ENCODE measurements at regions of chr18 and their contacts with region 1.

Region 1: GRCh38 chr18:42114310-42114943 is 159.4 kb downstream of the PIK3C3 start:
- DNase-seq: peak; percentile 6 to 51
- ATAC-seq: peak; percentile 64 to 89; a peak in 4 of 6 replicates
- H3K4me3 ChIP-seq: no peak overlapping the region
- H3K27ac ChIP-seq: no peak overlapping the region
- H3K4me1 ChIP-seq: peaks cover 3% of the 10 kb centered on the region; the same call in 1 of the 3 replicates
- CTCF ChIP-seq: peak; percentile 77
- EP300 ChIP-seq: no peak
- POLR2A ChIP-seq: no peak
- RAD21 ChIP-seq: peak; percentile 88 to 90

Region 2: DNA sequence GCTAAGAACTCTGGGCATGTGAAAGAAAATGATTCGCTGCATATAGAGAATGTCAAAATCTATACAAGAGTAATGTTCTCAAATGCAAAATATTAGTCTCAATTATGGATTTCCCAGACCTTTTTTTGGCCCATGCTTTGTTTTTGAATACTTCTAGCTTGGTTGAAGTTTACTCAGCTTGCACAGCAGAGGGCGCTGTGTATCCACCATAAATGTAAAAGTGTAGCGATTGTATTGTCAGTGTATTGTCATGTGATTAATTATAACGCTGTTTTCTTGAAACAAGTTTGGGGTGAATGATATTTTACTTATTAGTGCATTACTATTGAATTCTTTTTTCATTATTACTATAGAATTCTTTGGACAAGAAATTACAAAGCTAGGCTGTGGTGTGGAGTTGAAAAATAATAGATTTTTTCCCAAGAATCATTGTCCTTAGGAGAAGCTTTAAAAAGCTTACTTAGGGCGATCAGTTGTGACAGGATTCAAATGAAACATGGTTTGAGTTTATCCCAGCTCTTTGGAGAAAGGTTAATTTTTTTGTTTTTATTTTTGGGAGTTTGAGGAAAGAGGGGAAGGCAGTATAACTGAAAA is 61.1 kb before region 1 on chr18:
- CTCF ChIA-PET with region 1: interaction called, 11 read pairs
- POLR2A ChIA-PET with region 1: no interaction called
- DNase-seq: peak in 1 of 2 experiments; percentile 33
- ATAC-seq: peak; percentile 73 to 75; a peak in 5 of 6 replicates
- H3K4me3 ChIP-seq: no peak overlapping the region
- H3K27ac ChIP-seq: no peak overlapping the region
- H3K4me1 ChIP-seq: peaks cover 8% of the 10 kb centered on the region; the same call in 2 of the 3 replicates
- CTCF ChIP-seq: peak; percentile 77
- EP300 ChIP-seq: no peak
- POLR2A ChIP-seq: no peak
- RAD21 ChIP-seq: peak; percentile 52 to 56

Region 3: GRCh38 chr18:42126586-42126985 is 12.2 kb after region 1 on chr18:
- CTCF ChIA-PET with region 1: interaction called, 18 read pairs
- POLR2A ChIA-PET with region 1: no interaction called
- DNase-seq: no peak
- ATAC-seq: no peak
- H3K4me3 ChIP-seq: no peak overlapping the region
- H3K27ac ChIP-seq: no peak overlapping the region
- H3K4me1 ChIP-seq: no peaks in the 10 kb centered on the region
- CTCF ChIP-seq: no peak
- EP300 ChIP-seq: no peak
- POLR2A ChIP-seq: no peak
- RAD21 ChIP-seq: no peak

Region 4: GRCh38 chr18:42229211-42230210 is 115.1 kb after region 1 on chr18:
- CTCF ChIA-PET with region 1: no interaction called
- POLR2A ChIA-PET with region 1: no interaction called
- DNase-seq: no peak
- ATAC-seq: no peak
- H3K4me3 ChIP-seq: no peak overlapping the region
- H3K27ac ChIP-seq: no peak overlapping the region
- H3K4me1 ChIP-seq: no peaks in the 10 kb centered on the region
- CTCF ChIP-seq: no peak
- EP300 ChIP-seq: no peak
- POLR2A ChIP-seq: no peak
- RAD21 ChIP-seq: no peak

Region 5: DNA sequence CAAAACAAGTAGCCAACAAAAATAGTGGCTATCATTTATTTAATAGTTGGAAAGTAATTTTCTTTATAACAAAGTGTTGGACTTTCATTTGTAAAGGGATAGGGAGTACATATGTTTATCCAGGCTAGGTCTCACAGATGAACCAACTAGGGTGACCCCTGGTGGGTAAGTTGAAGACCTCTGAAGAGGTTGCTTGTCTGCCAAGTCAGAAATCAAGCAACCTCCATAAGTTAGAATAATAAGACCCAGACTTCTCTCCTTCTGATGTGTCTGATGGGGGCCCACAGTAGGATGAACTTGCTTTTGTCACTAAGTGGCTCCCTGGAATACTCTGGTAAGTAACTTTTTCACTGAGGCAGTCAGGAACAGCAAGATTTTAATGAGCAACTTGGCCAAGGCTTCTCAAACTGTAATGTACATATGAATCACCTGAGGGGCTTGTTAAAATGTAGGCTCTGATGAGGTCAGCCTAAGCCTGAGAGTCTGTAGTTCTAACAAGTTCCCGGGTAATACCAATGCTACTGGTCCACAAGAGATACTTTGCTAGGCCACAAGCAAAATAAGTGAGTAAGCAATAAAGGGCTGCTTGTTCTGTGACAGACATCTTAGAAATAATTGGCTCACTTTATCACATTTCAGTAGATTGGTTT is 160.2 kb after region 1 on chr18:
- CTCF ChIA-PET with region 1: interaction called, 28 read pairs
- POLR2A ChIA-PET with region 1: no interaction called
- DNase-seq: peak in 1 of 2 experiments; percentile 34
- ATAC-seq: peak in 1 of 2 experiments; percentile 44; a peak in 2 of 6 replicates
- H3K4me3 ChIP-seq: no peak overlapping the region
- H3K27ac ChIP-seq: no peak overlapping the region
- H3K4me1 ChIP-seq: no peaks in the 10 kb centered on the region
- CTCF ChIP-seq: no peak
- EP300 ChIP-seq: no peak
- POLR2A ChIP-seq: no peak
- RAD21 ChIP-seq: no peak

Region 6: GRCh38 chr18:43271593-43272432 is 1157.4 kb after region 1 on chr18:
- CTCF ChIA-PET with region 1: interaction called, 22 read pairs
- POLR2A ChIA-PET with region 1: no interaction called
- DNase-seq: peak in 1 of 2 experiments; percentile 32
- ATAC-seq: no peak
- H3K4me3 ChIP-seq: no peak overlapping the region
- H3K27ac ChIP-seq: no peak overlapping the region
- H3K4me1 ChIP-seq: no peaks in the 10 kb centered on the region
- CTCF ChIP-seq: peak; percentile 53; the same call in 2 of the 3 replicates
- EP300 ChIP-seq: no peak
- POLR2A ChIP-seq: no peak
- RAD21 ChIP-seq: peak; percentile 41 to 49; a peak in 4 of 5 replicates